ENCODE measurements at regions of chr18 and their contacts with region 1.

Region 1: GRCh38 chr18:75201282-75202270 is 7.4 kb downstream of the PTGR3 start:
- DNase-seq: no peak
- ATAC-seq: no peak
- H3K4me3 Mint-ChIP-seq: no peak overlapping the region
- H3K27ac Mint-ChIP-seq: no peak overlapping the region
- H3K4me1 Mint-ChIP-seq: peaks cover 32% of the 10 kb centered on the region
- H3K27me3 Mint-ChIP-seq: peaks cover 11% of the 10 kb centered on the region

Region 2: DNA sequence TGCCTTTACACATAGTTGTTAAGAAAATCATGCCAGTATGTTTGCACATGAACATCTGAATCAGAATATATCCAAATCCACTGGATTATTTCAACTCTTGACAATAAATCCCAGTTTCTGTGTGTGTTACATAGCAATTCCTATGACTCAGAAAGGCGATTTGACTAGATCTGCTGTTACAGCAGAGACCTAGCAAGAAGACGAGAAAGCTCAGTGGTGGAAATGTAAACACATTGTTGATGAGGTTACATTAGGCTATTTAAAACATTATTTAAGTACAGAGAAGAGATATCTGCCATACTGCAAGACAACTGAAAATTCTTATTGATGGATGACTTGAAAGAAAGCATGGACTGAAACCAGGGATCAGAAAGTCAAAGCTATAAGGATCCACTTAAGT is 299.0 kb after region 1 on chr18:
- CTCF ChIA-PET with region 1: no interaction called
- POLR2A ChIA-PET with region 1: no interaction called
- intact Hi-C with region 1: no loop called
- DNase-seq: no peak
- ATAC-seq: no peak
- H3K4me3 Mint-ChIP-seq: no peak overlapping the region
- H3K27ac Mint-ChIP-seq: no peak overlapping the region
- H3K4me1 Mint-ChIP-seq: no peaks in the 10 kb centered on the region
- H3K27me3 Mint-ChIP-seq: peaks cover 34% of the 10 kb centered on the region

Region 3: GRCh38 chr18:76064998-76065397 is 863.4 kb after region 1 on chr18:
- CTCF ChIA-PET with region 1: no interaction called
- POLR2A ChIA-PET with region 1: no interaction called
- intact Hi-C with region 1: no loop called
- DNase-seq: no peak
- ATAC-seq: no peak
- H3K4me3 Mint-ChIP-seq: no peak overlapping the region
- H3K27ac Mint-ChIP-seq: no peak overlapping the region
- H3K4me1 Mint-ChIP-seq: no peaks in the 10 kb centered on the region
- H3K27me3 Mint-ChIP-seq: peaks cover 3% of the 10 kb centered on the region

Region 4: DNA sequence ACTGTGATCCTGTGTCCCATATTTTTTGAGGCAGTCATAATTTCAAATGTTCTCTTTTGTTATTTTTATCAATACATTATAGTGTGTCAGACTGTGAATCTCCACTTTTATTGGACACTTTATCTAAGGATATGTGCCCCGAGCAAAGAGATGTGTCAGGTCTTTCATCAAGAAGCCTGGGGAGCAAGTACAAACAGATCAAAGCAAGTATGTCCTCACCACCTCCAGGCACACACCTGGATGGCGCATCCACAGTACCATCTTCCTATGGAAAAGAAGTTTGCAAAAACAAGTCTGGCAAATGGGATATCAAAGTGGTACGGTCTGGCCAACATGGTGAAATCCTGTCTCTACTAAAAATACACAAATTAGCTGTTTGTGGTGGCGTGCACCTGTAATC is 1539.8 kb after region 1 on chr18:
- CTCF ChIA-PET with region 1: no interaction called
- POLR2A ChIA-PET with region 1: interaction called, 10 read pairs
- intact Hi-C with region 1: no loop called
- DNase-seq: no peak
- ATAC-seq: no peak
- H3K4me3 Mint-ChIP-seq: no peak overlapping the region
- H3K27ac Mint-ChIP-seq: no peak overlapping the region
- H3K4me1 Mint-ChIP-seq: peaks cover 3% of the 10 kb centered on the region
- H3K27me3 Mint-ChIP-seq: peaks cover 7% of the 10 kb centered on the region

Measured in activated CD4-positive, alpha-beta T cell treated with anti-CD3 and anti-CD28 coated beads for 36 hours (primary cell).